ENCODE measurements at regions of chr7 and their contacts with region 1.

Region 1: DNA sequence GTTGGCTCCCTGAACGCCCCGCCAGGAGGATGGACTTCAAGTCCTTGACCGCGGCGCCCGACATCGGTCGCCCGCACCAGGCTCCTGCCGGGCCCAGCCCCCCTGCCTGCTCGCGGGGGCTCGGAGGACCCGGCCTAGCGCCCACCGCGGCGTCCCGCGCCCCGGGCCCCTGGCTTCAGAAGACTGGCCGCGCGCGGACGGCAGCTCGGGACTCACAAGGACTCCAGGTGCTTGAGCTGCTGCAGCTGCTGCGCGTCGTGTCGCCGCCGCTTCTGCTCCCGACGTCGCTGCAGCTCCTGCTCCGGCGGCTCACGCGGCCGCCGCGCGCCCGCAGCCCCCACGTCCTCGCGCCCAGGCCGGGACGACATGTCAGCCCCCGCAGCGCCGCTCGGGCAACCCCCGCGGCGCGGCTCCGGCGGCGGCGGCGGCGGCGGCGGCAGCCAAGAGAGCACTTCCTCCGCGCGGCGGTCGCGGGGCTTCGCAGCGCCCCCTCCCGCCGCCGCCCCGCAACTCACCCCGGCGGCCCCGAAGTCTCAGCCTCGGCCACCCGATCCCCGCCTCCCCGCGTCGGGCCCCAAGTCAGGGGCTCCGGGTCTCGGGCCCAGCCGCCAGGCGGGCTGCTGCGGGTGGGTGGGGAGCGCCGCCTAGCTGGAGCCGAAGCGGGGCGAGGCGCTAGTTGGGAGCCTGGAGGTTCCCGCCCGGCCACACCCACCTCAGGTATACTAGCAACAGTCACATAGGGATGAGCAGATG is at the start of gene RP9:
- DNase-seq: peak; percentile 48 to 66 (median 62)
- H3K4me3 ChIP-seq: peak within 1 kb of the TSS; percentile 16 to 100 (median 79)
- H3K27ac ChIP-seq: peak within 1 kb of the TSS in 4 of 5 donors; percentile 71 to 86 (median 80)
- H3K4me1 ChIP-seq: peaks cover 9 to 35% of the 10 kb centered on the region in 2 donors
- H3K27me3 ChIP-seq: no peaks in the 10 kb centered on the region
- CTCF ChIP-seq: peak; percentile 4 to 71 (median 44)
- POLR2A ChIP-seq: peak; percentile 19 to 33
- total RNA-seq, gene RP9: 4.2 to 23.0 (median 11.8) TPM

Region 2: GRCh38 chr7:32803406-32804141 is 305.6 kb before region 1 on chr7:
- intact Hi-C with region 1: loop called in 1 of 2 experiments (anchors 5 kb)
- DNase-seq: no peak
- H3K4me3 ChIP-seq: no peak overlapping the region
- H3K27ac ChIP-seq: no peak overlapping the region
- H3K4me1 ChIP-seq: no peaks in the 10 kb centered on the region
- H3K27me3 ChIP-seq: no peaks in the 10 kb centered on the region
- CTCF ChIP-seq: no peak
- POLR2A ChIP-seq: no peak

Region 3: GRCh38 chr7:32942786-32943653 is 166.2 kb before region 1 on chr7:
- intact Hi-C with region 1: loop called in 1 of 2 experiments (anchors 10 kb)
- DNase-seq: peak; percentile 73 to 87 (median 81)
- H3K4me3 ChIP-seq: peak overlapping the region in 2 of 4 donors; percentile 66 to 100
- H3K27ac ChIP-seq: peak overlapping the region in 4 of 5 donors; percentile 95 to 97 (median 96)
- H3K4me1 ChIP-seq: peaks cover 13 to 32% of the 10 kb centered on the region in 2 donors
- H3K27me3 ChIP-seq: no peaks in the 10 kb centered on the region
- CTCF ChIP-seq: peak in 5 of 6 experiments; percentile 10 to 79 (median 60)
- POLR2A ChIP-seq: peak; percentile 26 to 57

Measured in adrenal gland (tissue), 19 donors.